ENCODE measurements at regions of chr5 and their contacts with region 1.

Region 1: GRCh38 chr5:177440211-177440971 is 6.2 kb upstream of the PRR7 start:
- DNase-seq: peak; percentile 86
- H3K4me3 Mint-ChIP-seq: peak overlapping the region; percentile 32
- H3K27ac Mint-ChIP-seq: peak overlapping the region; percentile 91
- H3K4me1 Mint-ChIP-seq: peaks cover 69% of the 10 kb centered on the region
- H3K27me3 Mint-ChIP-seq: no peaks in the 10 kb centered on the region

Region 2: GRCh38 chr5:177370488-177371119 is 69.8 kb before region 1 on chr5:
- CTCF ChIA-PET with region 1: interaction called, 10 read pairs
- POLR2A ChIA-PET with region 1: interaction called, 4 read pairs
- intact Hi-C with region 1: no loop called
- DNase-seq: peak; percentile 79
- H3K4me3 Mint-ChIP-seq: peak overlapping the region; percentile 74
- H3K27ac Mint-ChIP-seq: peak overlapping the region; percentile 38
- H3K4me1 Mint-ChIP-seq: peaks cover 65% of the 10 kb centered on the region
- H3K27me3 Mint-ChIP-seq: no peaks in the 10 kb centered on the region

Region 3: DNA sequence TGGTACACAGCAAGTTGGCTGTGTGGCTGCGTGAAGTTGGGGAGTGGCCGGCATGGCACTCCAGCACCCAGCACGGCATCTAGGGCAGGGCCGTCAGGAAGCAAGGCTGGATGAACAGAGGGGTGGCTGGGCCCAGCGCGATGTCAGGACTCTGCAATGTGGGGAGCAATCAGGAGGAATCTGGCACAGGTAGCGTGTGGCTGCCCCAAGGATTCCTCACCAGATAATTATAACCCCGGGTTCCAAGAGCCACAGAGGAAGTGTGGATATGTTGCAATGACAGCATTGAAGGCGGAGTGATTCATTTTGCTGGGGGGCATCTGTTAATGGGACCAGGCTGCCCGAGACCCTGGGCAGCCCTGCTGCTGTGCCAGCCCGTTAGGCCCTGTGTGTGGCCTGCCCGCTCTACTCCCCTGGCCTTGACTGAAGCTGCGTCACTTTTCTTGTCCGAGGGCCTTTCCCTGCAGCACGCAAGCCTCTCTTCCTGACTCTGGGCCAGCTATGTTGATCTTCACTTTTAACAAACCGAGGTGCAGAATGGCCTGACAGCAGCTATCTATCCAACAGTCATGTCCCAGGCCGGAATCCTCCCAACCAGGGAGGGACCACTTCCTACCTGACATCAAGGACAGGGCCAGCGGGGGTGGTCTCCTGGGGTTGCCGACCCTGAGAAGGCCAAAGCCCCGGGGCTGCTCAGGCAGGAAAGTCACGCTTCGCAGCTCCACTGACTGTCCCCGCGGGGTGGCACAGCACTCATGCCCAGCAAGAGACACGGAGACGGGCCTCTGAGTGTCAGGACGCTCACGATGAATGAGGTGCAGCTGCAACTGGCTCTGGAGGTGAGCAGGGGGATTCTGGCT is 910.2 kb after region 1 on chr5:
- CTCF ChIA-PET with region 1: no interaction called
- POLR2A ChIA-PET with region 1: no interaction called
- intact Hi-C with region 1: no loop called
- DNase-seq: no peak
- H3K4me3 Mint-ChIP-seq: no peak overlapping the region
- H3K27ac Mint-ChIP-seq: no peak overlapping the region
- H3K4me1 Mint-ChIP-seq: no peaks in the 10 kb centered on the region
- H3K27me3 Mint-ChIP-seq: peaks cover 6% of the 10 kb centered on the region